A673 (cell line): ENCODE measurements at regions of chr1 and their contacts with region 1.

Region 1: GRCh38 chr1:8238851-8239305 is 79.0 kb upstream of the SLC45A1 start:
- DNase-seq: peak; percentile 18
- H3K4me3 ChIP-seq: no peak overlapping the region
- H3K27ac ChIP-seq: no peak overlapping the region
- H3K4me1 ChIP-seq: no peaks in the 10 kb centered on the region
- H3K27me3 ChIP-seq: no peaks in the 10 kb centered on the region
- CTCF ChIP-seq: peak; percentile 46

Region 2: DNA sequence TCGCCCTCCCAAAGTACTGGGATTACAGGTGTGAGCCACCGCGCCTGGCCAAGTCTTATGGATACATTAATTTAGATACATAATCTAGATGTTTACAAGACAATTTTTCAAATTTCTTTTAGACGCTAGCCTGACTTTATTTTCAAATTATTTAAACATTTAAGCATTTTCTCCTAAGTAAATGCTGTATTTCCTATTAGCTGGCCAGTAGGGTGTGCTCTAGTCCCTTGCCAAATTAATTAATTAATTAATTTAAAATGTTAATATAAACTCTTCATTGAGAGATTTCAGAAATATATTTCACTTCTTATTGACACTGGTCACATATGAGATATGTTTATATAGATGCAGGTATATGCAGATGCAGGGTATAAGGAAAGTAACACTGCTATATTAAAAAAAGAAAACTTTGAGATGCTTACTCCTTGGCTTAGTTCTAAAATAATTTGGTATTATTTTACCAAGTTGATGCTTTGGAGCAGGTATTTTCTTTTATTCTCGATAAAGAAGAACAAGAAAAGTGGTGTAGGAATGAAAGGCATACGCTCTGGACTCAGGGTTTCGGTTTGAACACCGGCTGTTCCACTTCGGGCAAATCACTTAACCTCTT is 207.6 kb before region 1 on chr1:
- CTCF ChIA-PET with region 1: no interaction called
- POLR2A ChIA-PET with region 1: no interaction called
- intact Hi-C with region 1: loop called (anchors 2 kb)
- DNase-seq: peak; percentile 63
- H3K4me3 ChIP-seq: no peak overlapping the region
- H3K27ac ChIP-seq: no peak overlapping the region
- H3K4me1 ChIP-seq: peaks cover 24% of the 10 kb centered on the region
- H3K27me3 ChIP-seq: no peaks in the 10 kb centered on the region
- CTCF ChIP-seq: peak; percentile 69

Region 3: GRCh38 chr1:8329439-8329838 is 90.6 kb after region 1 on chr1:
- CTCF ChIA-PET with region 1: no interaction called
- POLR2A ChIA-PET with region 1: no interaction called
- intact Hi-C with region 1: no loop called
- DNase-seq: no peak
- H3K4me3 ChIP-seq: no peak overlapping the region
- H3K27ac ChIP-seq: no peak overlapping the region
- H3K4me1 ChIP-seq: no peaks in the 10 kb centered on the region
- H3K27me3 ChIP-seq: no peaks in the 10 kb centered on the region
- CTCF ChIP-seq: no peak